MCF 10A (cell line): ENCODE measurements at regions of chr3 and their contacts with region 1.

Region 1: DNA sequence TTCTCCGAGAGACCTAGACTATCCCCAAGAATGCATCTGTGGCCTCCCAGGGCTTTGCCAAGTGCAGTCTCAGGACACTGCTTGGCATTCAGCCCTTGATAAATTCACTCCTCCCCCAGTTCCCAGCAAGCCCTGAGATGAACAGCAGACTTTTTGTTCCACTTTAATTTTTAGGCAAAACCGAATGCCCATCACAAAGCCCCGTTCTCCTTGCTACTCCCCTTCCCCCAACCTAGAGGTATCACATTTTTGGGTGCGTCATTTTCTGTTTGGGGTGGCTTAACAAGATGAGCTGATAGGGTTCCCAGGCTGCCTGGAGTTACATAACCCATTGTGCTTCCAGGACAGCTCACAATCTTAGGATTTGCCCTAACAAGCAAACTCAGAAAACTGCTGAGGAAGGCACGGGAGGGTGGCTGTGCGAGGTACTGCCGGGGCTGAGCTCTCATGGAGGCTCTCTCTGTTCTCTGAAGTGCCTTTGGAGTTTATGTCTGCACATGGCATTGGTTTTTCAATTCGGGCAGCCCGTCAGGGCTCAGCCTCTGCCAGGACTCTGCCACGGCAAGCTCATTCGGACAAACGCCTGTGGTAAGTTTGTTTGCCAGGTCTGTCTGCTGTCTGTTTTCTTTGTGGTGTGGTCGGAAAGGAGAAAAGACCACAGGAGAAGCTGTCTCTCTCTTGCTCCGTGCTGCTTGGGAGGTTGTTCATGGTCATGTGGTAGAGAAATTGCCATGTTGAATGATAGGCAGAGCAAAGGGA is at the start of gene TRAK1:
- DNase-seq: peak; percentile 91
- H3K4me3 Mint-ChIP-seq: peak within 1 kb of the TSS; percentile 70
- H3K27ac Mint-ChIP-seq: peak within 1 kb of the TSS; percentile 72
- H3K4me1 Mint-ChIP-seq: peaks cover 20% of the 10 kb centered on the region
- H3K27me3 Mint-ChIP-seq: no peaks in the 10 kb centered on the region
- CTCF ChIP-seq: no peak
- total RNA-seq, gene TRAK1: 32.8 and 33.2 TPM in 2 replicates

Region 2: GRCh38 chr3:42071904-42072592 is 19.1 kb before region 1 on chr3:
- CTCF ChIA-PET with region 1: interaction called, 4 read pairs
- POLR2A ChIA-PET with region 1: interaction called, 22 read pairs
- intact Hi-C with region 1: no loop called
- DNase-seq: peak; percentile 94
- H3K4me3 Mint-ChIP-seq: peak overlapping the region; percentile 50
- H3K27ac Mint-ChIP-seq: peak overlapping the region; percentile 43
- H3K4me1 Mint-ChIP-seq: peaks cover 34% of the 10 kb centered on the region
- H3K27me3 Mint-ChIP-seq: no peaks in the 10 kb centered on the region
- CTCF ChIP-seq: no peak

Region 3: GRCh38 chr3:42080452-42080891 is 10.7 kb before region 1 on chr3:
- CTCF ChIA-PET with region 1: interaction called, 4 read pairs
- POLR2A ChIA-PET with region 1: interaction called, 52 read pairs
- intact Hi-C with region 1: no loop called
- DNase-seq: peak; percentile 84
- H3K4me3 Mint-ChIP-seq: peak overlapping the region; percentile 37
- H3K27ac Mint-ChIP-seq: peak overlapping the region; percentile 97
- H3K4me1 Mint-ChIP-seq: peaks cover 28% of the 10 kb centered on the region
- H3K27me3 Mint-ChIP-seq: no peaks in the 10 kb centered on the region
- CTCF ChIP-seq: no peak